ENCODE measurements at regions of chr6 and their contacts with region 1.

Region 1: GRCh38 chr6:31729515-31729978 is 448 bp upstream of the DDAH2 start:
- DNase-seq: peak; percentile 93
- H3K4me3 ChIP-seq: peak overlapping the region; percentile 90 to 93
- H3K27ac ChIP-seq: peak overlapping the region; percentile 94
- H3K4me1 ChIP-seq: peaks cover 18 to 21% of the 10 kb centered on the region in 2 experiments; a peak in 2 of 4 replicates
- H3K27me3 ChIP-seq: no peaks in the 10 kb centered on the region
- CTCF ChIP-seq: no peak
- EP300 ChIP-seq: no peak
- RAD21 ChIP-seq: peak; percentile 79

Region 2: DNA sequence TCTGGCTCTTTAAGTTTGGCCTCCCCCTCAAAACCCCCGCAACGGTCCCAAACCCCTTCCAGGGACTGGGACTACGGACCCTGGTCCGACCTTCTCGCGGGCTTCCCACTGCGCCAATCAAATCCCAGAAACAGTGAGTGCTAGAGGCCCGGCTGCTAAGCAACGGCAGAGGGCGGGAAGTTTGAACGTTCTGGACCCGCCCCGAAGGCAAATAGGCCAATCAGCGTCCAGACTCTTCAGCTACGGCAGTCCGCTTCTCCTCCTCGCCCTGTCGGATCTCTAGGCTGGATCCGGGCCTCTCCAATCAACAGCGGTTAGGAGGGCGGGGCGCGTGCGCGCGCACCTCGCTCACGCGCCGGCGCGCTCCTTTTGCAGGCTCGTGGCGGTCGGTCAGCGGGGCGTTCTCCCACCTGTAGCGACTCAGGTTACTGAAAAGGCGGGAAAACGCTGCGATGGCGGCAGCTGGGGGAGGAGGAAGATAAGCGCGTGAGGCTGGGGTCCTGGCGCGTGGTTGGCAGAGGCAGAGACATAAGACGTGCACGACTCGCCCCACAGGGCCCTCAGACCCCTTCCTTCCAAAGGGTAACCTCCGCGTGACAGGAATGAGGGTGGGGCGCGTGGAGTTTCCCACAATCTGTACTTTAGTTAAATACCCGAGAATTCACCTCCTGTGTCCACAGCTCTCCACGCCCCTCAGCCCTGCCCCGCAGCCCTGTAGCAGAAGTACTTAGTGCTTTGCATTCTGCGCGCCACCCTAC is 10.3 kb after region 1 on chr6 and contains the start of gene MSH5:
- CTCF ChIA-PET with region 1: interaction called, 39 read pairs
- POLR2A ChIA-PET with region 1: interaction called, 4 read pairs
- DNase-seq: peak; percentile 95
- H3K4me3 ChIP-seq: peak within 1 kb of the TSS; percentile 77 to 83
- H3K27ac ChIP-seq: peak within 1 kb of the TSS; percentile 75 to 88
- H3K4me1 ChIP-seq: peaks cover 15 to 24% of the 10 kb centered on the region in 2 experiments; a peak in 3 of 4 replicates
- H3K27me3 ChIP-seq: no peaks in the 10 kb centered on the region
- CTCF ChIP-seq: no peak
- EP300 ChIP-seq: no peak
- RAD21 ChIP-seq: no peak
- polyA plus RNA-seq, gene MSH5: 16.0 and 19.5 TPM in 2 replicates

Region 3: GRCh38 chr6:31806465-31807272 is 77.1 kb after region 1 on chr6 and contains the start of gene LSM2:
- CTCF ChIA-PET with region 1: interaction called, 14 read pairs
- POLR2A ChIA-PET with region 1: interaction called, 4 read pairs
- DNase-seq: peak; percentile 99
- H3K4me3 ChIP-seq: peak within 1 kb of the TSS; percentile 64 to 73
- H3K27ac ChIP-seq: peak within 1 kb of the TSS; percentile 79 to 80
- H3K4me1 ChIP-seq: peaks cover 5% of the 10 kb centered on the region in 2 experiments; a peak in 2 of 4 replicates
- H3K27me3 ChIP-seq: no peaks in the 10 kb centered on the region
- CTCF ChIP-seq: peak; percentile 46
- EP300 ChIP-seq: no peak
- RAD21 ChIP-seq: no peak
- polyA plus RNA-seq, gene LSM2: 47.8 and 79.1 TPM in 2 replicates

Region 4: GRCh38 chr6:31862344-31863227 is 133.0 kb after region 1 on chr6 and contains the start of gene NEU1:
- CTCF ChIA-PET with region 1: interaction called, 14 read pairs
- POLR2A ChIA-PET with region 1: interaction called, 4 read pairs
- DNase-seq: peak; percentile 97
- H3K4me3 ChIP-seq: peak within 1 kb of the TSS; percentile 78 to 98
- H3K27ac ChIP-seq: peak within 1 kb of the TSS; percentile 79 to 81
- H3K4me1 ChIP-seq: peaks cover 0 to 14% of the 10 kb centered on the region in 2 experiments; a peak in 1 of 4 replicates
- H3K27me3 ChIP-seq: no peaks in the 10 kb centered on the region
- CTCF ChIP-seq: no peak
- EP300 ChIP-seq: 0 out of 4 replicates have a peak, but pooled peaks of 1 of the 2 experiments have one; percentile 12
- RAD21 ChIP-seq: no peak
- polyA plus RNA-seq, gene NEU1: 42.2 and 43.0 TPM in 2 replicates

Measured in SK-N-SH (cell line).